ENCODE measurements at regions of chr6 and their contacts with region 1.

Region 1: GRCh38 chr6:18503593-18504231 is 116.6 kb downstream of the RNF144B start:
- DNase-seq: peak; percentile 83
- H3K4me3 ChIP-seq: peak overlapping the region; percentile 4 to 48 (median 20)
- H3K27ac ChIP-seq: peak overlapping the region; percentile 27
- H3K4me1 ChIP-seq: peaks cover 9% of the 10 kb centered on the region
- H3K27me3 ChIP-seq: no peaks in the 10 kb centered on the region
- CTCF ChIP-seq: peak; percentile 84 to 96
- POLR2A ChIP-seq: no peak

Region 2: DNA sequence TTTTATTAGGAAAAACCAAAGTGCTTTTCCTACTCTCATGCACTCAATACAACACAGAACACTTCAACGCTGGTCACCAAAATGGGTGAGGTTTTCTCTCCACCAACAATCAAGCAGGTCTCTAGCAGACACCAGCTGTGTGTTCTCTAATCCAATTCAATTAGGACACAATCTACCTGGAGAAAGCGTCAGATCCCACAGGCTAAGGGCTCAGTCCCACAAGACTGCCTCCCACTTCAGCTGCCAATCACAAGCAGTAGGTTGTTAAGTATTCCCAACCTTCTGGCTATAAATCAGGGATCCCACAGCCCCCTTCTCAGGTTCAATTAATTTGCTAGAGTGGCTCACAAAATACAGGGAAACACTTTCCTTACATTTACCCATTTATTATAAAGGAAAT is 1354.1 kb before region 1 on chr6:
- CTCF ChIA-PET with region 1: no interaction called
- POLR2A ChIA-PET with region 1: no interaction called
- dilution Hi-C with region 1: no loop called
- intact Hi-C with region 1: loop called (anchors 5 kb)
- DNase-seq: no peak
- H3K4me3 ChIP-seq: no peak overlapping the region
- H3K27ac ChIP-seq: no peak overlapping the region
- H3K4me1 ChIP-seq: no peaks in the 10 kb centered on the region
- H3K27me3 ChIP-seq: no peaks in the 10 kb centered on the region
- CTCF ChIP-seq: no peak
- POLR2A ChIP-seq: no peak

Region 3: GRCh38 chr6:18155150-18155863 is 348.4 kb before region 1 on chr6 and contains the start of gene KDM1B:
- CTCF ChIA-PET with region 1: no interaction called
- POLR2A ChIA-PET with region 1: no interaction called
- dilution Hi-C with region 1: no loop called
- intact Hi-C with region 1: loop called (anchors 2 kb)
- DNase-seq: peak; percentile 98
- H3K4me3 ChIP-seq: peak within 1 kb of the TSS; percentile 91 to 95 (median 92)
- H3K27ac ChIP-seq: peak within 1 kb of the TSS; percentile 71
- H3K4me1 ChIP-seq: peaks cover 19% of the 10 kb centered on the region
- H3K27me3 ChIP-seq: no peaks in the 10 kb centered on the region
- CTCF ChIP-seq: no peak
- POLR2A ChIP-seq: no peak
- total RNA-seq, gene KDM1B: 9.6 and 10.8 TPM in 2 replicates

Region 4: DNA sequence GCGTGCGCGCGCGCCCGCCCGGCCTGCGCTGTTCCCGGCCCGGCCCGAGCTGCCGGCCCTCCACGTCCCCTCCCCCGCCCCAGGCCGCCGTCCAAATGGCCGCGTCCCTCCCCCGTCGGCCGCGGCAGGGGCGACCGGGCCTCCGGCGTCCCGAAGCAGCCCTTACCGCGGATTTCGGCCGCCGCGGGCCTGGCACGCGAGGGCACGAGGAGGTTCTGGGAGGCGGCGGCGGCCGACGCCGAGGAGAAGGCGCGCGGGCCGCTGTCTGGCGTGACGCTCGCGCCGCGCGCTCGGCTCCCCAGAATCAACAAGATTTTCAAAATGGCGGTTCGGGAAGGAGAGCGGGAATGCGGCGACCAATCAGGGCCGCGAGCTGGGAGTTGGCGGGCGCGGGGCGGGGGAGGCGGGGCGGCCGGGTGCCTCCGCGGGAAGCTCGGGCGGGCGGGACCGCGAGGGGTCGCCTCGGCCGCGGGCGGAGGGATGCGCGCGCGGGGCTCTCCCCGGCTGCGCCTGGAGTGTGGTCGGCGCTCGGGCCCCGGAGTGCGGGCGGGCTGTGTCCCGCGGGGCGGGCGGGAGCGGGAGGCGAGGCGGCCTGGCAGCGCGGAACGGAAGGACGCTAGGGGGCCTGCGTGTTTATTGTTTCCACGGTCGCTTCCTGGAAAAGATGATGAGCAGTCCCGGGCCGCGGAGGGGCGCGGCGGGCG is 239.3 kb before region 1 on chr6 and contains the start of gene DEK:
- CTCF ChIA-PET with region 1: interaction called, 6 read pairs
- POLR2A ChIA-PET with region 1: no interaction called
- dilution Hi-C with region 1: no loop called
- intact Hi-C with region 1: loop called (anchors 1 kb)
- DNase-seq: peak; percentile 80
- H3K4me3 ChIP-seq: peak within 1 kb of the TSS; percentile 63 to 94 (median 90)
- H3K27ac ChIP-seq: peak within 1 kb of the TSS; percentile 93
- H3K4me1 ChIP-seq: peaks cover 32% of the 10 kb centered on the region
- H3K27me3 ChIP-seq: peaks cover 6 to 8% of the 10 kb centered on the region in 2 experiments
- CTCF ChIP-seq: peak; percentile 26 to 50
- POLR2A ChIP-seq: peak; percentile 46
- total RNA-seq, gene DEK: 118 and 120 TPM in 2 replicates

Region 5: DNA sequence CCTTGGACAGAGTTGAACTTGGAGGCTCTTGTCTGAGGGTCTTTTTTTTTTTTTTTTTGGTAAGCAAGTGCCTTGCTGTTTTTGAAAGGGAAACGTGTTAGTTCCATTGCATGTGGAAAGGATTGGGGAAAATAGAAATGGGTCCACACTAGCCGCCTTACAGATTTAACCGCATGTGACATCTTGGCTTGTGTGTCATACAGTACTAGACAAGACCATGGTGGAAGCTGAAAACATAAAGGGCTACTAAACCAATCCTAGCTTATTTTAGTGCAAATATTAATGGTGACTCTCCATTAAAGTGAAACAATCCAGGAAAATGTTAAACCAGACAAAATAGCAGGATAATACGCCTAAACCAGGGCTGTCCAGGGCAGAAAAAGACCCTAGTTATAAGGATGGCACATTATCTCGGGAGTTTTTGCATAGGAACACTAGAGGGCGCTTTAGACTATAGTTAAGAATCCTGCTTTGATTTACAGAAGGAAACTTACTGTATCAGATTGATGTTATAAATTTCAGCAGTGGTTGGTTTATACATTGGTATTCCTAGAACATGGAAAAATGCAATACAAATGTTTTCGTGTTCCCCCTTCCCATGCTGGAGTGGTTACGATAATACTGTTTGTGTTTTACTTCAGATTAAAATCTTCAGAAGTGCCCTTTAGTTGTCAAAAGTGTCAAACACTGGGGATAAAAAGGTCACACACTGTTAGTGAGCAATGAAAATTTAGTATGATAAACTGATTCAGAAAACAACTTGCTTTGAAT is 179.6 kb before region 1 on chr6:
- CTCF ChIA-PET with region 1: interaction called, 93 read pairs
- POLR2A ChIA-PET with region 1: interaction called, 8 read pairs
- dilution Hi-C with region 1: no loop called
- intact Hi-C with region 1: loop called (anchors 1 kb)
- DNase-seq: peak; percentile 69
- H3K4me3 ChIP-seq: no peak overlapping the region
- H3K27ac ChIP-seq: no peak overlapping the region
- H3K4me1 ChIP-seq: peaks cover 16% of the 10 kb centered on the region
- H3K27me3 ChIP-seq: no peaks in the 10 kb centered on the region
- CTCF ChIP-seq: peak; percentile 48 to 49
- POLR2A ChIP-seq: no peak

Region 6: GRCh38 chr6:18371010-18371409 is 132.7 kb before region 1 on chr6:
- CTCF ChIA-PET with region 1: interaction called, 3 read pairs
- POLR2A ChIA-PET with region 1: no interaction called
- dilution Hi-C with region 1: no loop called
- intact Hi-C with region 1: loop called (anchors 1 kb)
- DNase-seq: peak; percentile 87
- H3K4me3 ChIP-seq: peak overlapping the region in 1 of 3 experiments; percentile 5
- H3K27ac ChIP-seq: peak overlapping the region; percentile 83
- H3K4me1 ChIP-seq: peaks cover 43% of the 10 kb centered on the region
- H3K27me3 ChIP-seq: no peaks in the 10 kb centered on the region
- CTCF ChIP-seq: no peak
- POLR2A ChIP-seq: peak; percentile 44

Region 7: GRCh38 chr6:18400831-18401446 is 102.8 kb before region 1 on chr6:
- CTCF ChIA-PET with region 1: interaction called, 5 read pairs
- POLR2A ChIA-PET with region 1: no interaction called
- dilution Hi-C with region 1: no loop called
- intact Hi-C with region 1: loop called (anchors 5 kb)
- DNase-seq: peak; percentile 92
- H3K4me3 ChIP-seq: no peak overlapping the region
- H3K27ac ChIP-seq: peak overlapping the region; percentile 84
- H3K4me1 ChIP-seq: peaks cover 97% of the 10 kb centered on the region
- H3K27me3 ChIP-seq: no peaks in the 10 kb centered on the region
- CTCF ChIP-seq: no peak
- POLR2A ChIP-seq: peak; percentile 34

Region 8: GRCh38 chr6:18551228-18551627 is 47.5 kb after region 1 on chr6:
- CTCF ChIA-PET with region 1: no interaction called
- POLR2A ChIA-PET with region 1: no interaction called
- dilution Hi-C with region 1: no loop called
- intact Hi-C with region 1: no loop called
- DNase-seq: no peak
- H3K4me3 ChIP-seq: no peak overlapping the region
- H3K27ac ChIP-seq: no peak overlapping the region
- H3K4me1 ChIP-seq: no peaks in the 10 kb centered on the region
- H3K27me3 ChIP-seq: peaks cover 2 to 4% of the 10 kb centered on the region in 2 experiments
- CTCF ChIP-seq: no peak
- POLR2A ChIP-seq: no peak

Region 9: DNA sequence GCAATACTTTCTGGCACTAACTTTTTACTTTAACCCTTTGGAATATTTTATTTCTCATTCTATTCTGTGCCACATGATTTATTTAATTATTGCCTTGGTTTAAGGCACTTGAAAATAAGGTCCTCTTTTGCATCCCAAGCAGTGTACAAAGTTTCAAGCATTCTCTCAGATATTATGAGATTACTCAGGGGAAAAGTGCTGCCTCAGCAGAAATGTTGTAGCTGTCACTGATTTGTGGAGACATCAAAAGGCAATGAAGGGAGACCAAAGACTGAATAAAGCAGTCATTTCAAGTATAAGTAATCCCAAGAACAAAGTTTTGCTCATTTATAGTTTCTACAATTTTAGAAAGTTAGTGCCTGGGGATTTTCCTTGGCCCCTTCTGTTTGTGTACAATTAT is 136.4 kb after region 1 on chr6:
- CTCF ChIA-PET with region 1: no interaction called
- POLR2A ChIA-PET with region 1: no interaction called
- dilution Hi-C with region 1: no loop called
- intact Hi-C with region 1: no loop called
- DNase-seq: no peak
- H3K4me3 ChIP-seq: no peak overlapping the region
- H3K27ac ChIP-seq: no peak overlapping the region
- H3K4me1 ChIP-seq: no peaks in the 10 kb centered on the region
- H3K27me3 ChIP-seq: no peaks in the 10 kb centered on the region
- CTCF ChIP-seq: no peak
- POLR2A ChIP-seq: no peak

Measured in endothelial cell of umbilical vein (primary cell).